Colonic mucosa (tissue), 4 donors: ENCODE measurements at regions of chr14 and their contacts with region 1.

Region 1: DNA sequence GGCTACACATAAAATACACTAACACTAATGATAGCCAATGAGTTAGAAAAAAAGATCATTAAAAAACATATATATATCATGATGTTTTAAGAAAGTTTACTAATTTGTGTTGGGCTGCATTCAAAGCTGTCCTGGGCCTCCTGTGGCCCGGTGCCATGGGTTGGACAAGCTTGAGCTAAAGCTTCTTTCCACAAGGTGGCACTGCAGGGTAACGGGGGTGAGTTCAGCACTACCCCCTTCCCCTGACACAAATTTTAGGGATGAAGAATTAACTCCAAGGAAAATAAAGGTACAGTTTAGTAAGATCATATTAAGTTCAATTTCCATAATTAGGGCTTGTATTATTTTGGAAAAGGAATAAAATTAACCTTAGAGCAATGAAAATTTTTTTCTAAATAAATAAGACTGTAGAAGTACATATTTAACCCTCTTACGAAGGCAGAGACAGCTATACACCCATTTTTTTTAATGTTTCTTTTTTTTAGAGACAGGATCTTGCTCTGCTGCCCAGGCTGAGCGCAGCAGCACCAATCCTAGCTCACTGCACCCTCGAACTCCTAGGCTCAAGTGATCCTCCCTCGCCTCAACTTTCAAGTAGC is 38.9 kb downstream of the PPP1R13B start:
- DNase-seq: peak; percentile 87
- H3K4me3 ChIP-seq: no peak overlapping the region
- H3K27ac ChIP-seq: no peak overlapping the region
- H3K4me1 ChIP-seq: no peaks in the 10 kb centered on the region
- H3K27me3 ChIP-seq: no peaks in the 10 kb centered on the region
- CTCF ChIP-seq: peak; percentile 86

Region 2: DNA sequence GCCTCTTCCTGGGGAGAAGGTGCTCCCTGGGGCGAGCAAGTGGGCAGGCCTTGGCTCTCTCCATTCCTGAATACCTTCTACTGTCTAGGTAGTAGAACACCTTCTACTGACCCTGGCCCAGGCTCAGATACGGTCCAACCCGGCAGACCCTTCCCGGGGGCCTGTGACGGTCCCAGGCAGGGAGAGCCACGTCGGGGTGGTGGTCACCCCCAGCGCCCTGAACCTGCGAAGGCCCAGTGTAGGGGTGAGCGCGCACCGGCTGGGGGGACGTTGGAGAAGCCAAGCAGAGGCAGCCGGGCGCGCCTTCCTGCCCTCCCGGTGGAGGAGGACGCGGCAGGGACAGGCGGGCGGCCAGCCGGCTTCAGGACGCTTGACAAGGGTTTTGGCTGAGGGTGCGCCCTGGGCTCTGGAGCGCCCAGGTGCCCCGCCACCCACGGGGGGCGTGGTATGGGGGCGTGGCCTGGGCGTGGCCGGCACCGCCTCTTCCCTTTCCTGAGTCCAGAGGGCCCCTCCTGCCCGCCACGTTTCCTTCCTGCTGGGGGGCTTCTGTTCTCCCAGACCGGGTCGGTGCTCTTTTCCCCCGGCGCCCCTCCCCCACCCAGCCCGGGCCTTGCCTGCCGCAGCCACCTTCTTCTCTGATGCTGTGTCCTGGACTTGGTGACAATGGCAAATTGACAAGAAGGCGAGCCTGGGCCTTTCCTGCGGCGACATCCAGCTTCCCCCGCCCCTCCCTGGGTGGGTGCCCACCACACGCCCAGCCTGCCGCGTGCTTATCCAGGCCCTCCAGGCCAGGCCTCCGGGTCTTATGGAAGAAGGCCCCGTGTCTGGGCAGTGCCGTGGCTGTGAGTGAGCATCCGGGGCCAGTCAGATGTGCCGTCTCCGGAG is 63.3 kb after region 1 on chr14:
- intact Hi-C with region 1: no loop called
- DNase-seq: peak; percentile 92
- H3K4me3 ChIP-seq: peak overlapping the region; percentile 38
- H3K27ac ChIP-seq: peak overlapping the region; percentile 34
- H3K4me1 ChIP-seq: peaks cover 3% of the 10 kb centered on the region
- H3K27me3 ChIP-seq: no peaks in the 10 kb centered on the region
- CTCF ChIP-seq: no peak

Region 3: DNA sequence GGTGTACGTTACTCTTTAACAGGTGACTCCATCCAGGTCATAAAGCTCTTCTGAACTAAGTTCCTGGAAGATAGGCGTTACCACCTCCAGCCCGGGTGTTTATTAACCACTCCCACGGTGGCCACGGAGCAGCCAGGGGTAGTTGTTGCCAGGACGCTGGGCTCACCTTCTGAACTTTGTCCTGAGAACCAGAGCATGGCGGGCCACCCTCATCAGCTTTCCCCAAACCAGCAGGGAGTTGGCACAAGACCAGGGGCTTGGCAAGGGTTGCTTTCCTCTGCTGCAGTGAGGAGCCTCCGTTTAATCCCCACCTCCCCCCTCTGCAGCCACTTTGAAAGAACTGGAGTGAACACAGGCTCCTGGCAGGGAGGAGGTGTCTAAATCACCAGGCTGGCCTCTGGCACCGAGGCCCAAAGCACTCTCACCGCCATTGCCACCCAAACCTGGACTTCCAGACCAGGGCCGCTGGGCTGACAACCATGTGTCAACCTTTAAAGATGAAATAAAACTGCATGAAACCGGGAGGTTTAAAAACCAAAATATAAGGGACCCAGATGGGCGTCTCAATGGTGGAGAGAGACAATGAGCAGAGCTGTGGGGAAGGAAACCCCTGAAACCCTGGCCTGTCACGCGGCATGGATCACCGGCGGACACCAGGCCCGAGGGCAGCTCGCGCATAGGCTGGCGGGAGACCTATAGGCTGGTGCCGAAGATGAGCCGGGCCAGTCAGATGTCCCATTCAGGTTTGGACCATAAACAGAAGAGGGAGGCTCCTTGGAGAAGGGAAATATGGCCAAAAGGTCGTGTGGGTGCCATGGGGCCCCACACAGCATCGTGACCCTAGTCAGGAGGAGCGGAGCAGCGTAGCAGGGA is 88.8 kb after region 1 on chr14:
- intact Hi-C with region 1: no loop called
- DNase-seq: peak; percentile 93
- H3K4me3 ChIP-seq: no peak overlapping the region
- H3K27ac ChIP-seq: peak overlapping the region; percentile 86
- H3K4me1 ChIP-seq: peaks cover 10% of the 10 kb centered on the region
- H3K27me3 ChIP-seq: no peaks in the 10 kb centered on the region
- CTCF ChIP-seq: no peak

Region 4: DNA sequence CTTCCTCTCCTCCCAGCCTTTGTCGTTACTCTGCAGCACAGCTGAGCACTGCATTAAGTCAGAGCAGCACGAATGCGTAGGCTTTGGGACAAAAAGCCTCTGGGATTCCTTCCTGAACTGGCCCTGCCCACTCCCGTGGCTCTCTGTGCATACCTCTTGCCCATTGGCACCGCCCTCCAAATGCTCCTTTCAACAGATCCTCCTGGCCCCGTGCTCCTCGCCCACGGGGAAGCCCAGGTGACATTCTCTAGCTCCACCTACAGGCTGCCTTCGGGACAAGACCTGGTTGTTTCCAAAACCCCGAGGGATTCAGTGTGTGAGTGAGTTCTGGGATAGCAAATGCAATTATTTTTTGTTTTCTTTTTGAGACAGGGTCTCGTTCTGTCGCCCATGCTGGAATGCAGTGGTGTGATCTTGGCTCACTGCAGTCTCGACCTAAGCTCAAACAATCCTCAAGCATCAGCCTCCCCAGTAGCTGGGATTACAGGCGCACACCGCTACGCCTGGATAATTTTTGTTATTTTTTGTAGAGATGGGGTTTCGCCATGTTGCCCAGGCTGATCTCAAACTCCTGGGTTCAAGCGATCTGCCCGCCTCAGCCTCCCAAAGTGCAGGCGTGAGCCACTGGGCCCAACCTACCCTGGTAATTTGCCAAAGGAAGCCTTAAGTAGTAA is 101.9 kb after region 1 on chr14:
- intact Hi-C with region 1: loop called (anchors 5 kb)
- DNase-seq: peak; percentile 91
- H3K4me3 ChIP-seq: no peak overlapping the region
- H3K27ac ChIP-seq: no peak overlapping the region
- H3K4me1 ChIP-seq: no peaks in the 10 kb centered on the region
- H3K27me3 ChIP-seq: no peaks in the 10 kb centered on the region
- CTCF ChIP-seq: peak; percentile 84

Region 5: GRCh38 chr14:103984196-103984595 is 175.7 kb after region 1 on chr14:
- intact Hi-C with region 1: loop called (anchors 5 kb)
- DNase-seq: no peak
- H3K4me3 ChIP-seq: no peak overlapping the region
- H3K27ac ChIP-seq: no peak overlapping the region
- H3K4me1 ChIP-seq: no peaks in the 10 kb centered on the region
- H3K27me3 ChIP-seq: no peaks in the 10 kb centered on the region
- CTCF ChIP-seq: no peak

Region 6: DNA sequence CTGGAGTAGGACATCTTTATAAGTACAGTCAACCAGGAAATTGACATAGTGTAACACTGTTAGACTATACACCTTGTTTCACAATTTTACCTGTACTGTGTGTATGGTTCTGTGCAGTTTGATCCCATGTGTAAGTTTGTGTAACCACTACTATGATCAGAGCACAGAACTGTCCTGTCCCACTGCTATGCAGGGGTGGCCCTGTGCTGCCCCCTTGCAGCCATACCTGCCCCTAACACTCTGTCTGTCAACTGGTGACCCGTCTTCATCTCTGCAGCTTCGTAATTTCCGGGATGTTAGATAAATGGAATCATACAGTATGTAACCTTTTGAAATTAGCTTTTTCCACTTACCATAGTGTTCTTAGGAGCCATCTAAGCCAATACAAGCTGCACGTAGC is 192.5 kb after region 1 on chr14:
- intact Hi-C with region 1: no loop called
- DNase-seq: no peak
- H3K4me3 ChIP-seq: no peak overlapping the region
- H3K27ac ChIP-seq: no peak overlapping the region
- H3K4me1 ChIP-seq: no peaks in the 10 kb centered on the region
- H3K27me3 ChIP-seq: no peaks in the 10 kb centered on the region
- CTCF ChIP-seq: no peak

Region 7: DNA sequence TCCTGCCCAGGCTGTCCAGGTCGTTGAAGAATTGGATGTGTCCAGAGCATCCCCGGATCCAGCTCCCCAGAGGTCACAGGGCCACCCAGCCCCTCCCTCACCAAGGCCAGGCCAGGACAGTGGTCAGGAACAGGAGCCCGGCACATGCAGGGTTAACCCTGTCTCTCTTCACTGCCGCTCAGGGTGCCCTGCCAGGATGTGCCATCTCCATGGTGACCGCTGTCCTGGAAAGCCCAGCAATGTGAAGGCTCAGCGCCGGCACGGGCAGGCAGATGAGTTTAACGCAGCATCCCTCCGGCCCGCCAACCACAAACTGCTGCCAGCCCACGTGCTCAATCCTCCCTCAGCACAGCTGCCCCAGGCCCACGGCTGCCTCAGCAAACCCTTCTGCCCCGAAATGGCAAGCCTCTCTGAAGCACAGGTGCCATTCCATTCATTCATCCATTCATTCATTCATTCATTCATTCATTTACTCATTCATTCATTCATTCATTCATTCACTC is 791.7 kb after region 1 on chr14:
- intact Hi-C with region 1: no loop called
- DNase-seq: no peak
- H3K4me3 ChIP-seq: no peak overlapping the region
- H3K27ac ChIP-seq: no peak overlapping the region
- H3K4me1 ChIP-seq: no peaks in the 10 kb centered on the region
- H3K27me3 ChIP-seq: peaks cover 15% of the 10 kb centered on the region
- CTCF ChIP-seq: no peak